HCT116 (cell line): ENCODE measurements at regions of chr19 and their contacts with region 1.

Region 1: DNA sequence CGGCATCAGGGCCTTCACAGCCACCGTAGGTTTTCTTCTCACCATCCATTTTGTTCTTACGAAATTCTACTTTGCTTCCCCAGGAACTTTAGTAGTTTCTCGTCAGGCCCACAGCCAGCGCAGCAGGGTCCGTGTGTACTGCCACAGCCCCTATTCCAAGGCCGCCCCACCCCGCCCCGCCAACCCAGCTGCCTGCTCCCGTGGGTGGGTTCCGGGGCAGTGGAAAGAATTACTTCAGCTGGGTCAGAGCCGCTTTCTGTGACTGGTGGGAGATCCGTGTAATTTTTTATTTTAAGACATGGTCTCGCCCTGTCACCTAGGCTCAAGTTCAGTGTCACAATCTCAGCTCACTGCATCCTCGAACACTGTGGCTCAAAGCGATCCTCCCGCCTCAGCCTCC is 4.2 kb downstream of the OR7D2 start:
- DNase-seq: no peak
- ATAC-seq: no peak
- H3K4me3 ChIP-seq: no peak overlapping the region
- H3K27ac ChIP-seq: no peak overlapping the region
- H3K4me1 ChIP-seq: no peaks in the 10 kb centered on the region
- H3K27me3 ChIP-seq: no peaks in the 10 kb centered on the region
- CTCF ChIP-seq: no peak
- POLR2A ChIP-seq: no peak
- RAD21 ChIP-seq: no peak

Region 2: DNA sequence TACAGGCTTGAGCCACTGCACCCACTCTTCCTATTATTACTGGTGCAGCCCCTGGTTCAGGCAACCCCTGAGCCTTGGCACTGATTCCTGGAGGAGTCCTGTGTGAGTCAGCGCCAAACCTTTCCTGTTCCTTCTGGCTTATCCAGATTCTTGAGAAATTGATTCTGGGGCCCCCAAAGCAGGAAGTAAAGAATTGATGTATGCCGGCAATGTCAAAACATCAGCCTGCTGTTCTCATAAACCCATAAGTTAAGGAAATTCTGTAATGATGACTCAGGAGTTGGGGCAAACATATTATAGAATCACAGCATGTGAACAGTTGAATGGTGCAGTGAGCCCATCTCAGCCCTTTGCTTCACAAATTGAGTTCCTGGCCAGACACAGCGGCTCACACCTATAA is 54.8 kb before region 1 on chr19:
- CTCF ChIA-PET with region 1: no interaction called
- POLR2A ChIA-PET with region 1: no interaction called
- RAD21 ChIA-PET with region 1: no interaction called
- intact Hi-C with region 1: no loop called
- DNase-seq: peak; percentile 82
- ATAC-seq: peak; percentile 90
- H3K4me3 ChIP-seq: peak overlapping the region in 1 of 2 experiments; percentile 31; a peak in 1 of 4 replicates
- H3K27ac ChIP-seq: peak overlapping the region; percentile 57
- H3K4me1 ChIP-seq: peaks cover 16 to 31% of the 10 kb centered on the region in 2 experiments
- H3K27me3 ChIP-seq: no peaks in the 10 kb centered on the region
- CTCF ChIP-seq: no peak
- POLR2A ChIP-seq: no peak
- RAD21 ChIP-seq: peak; percentile 30; the same call in 1 of the 2 replicates

Region 3: GRCh38 chr19:9171393-9171991 is 11.5 kb before region 1 on chr19:
- CTCF ChIA-PET with region 1: no interaction called
- POLR2A ChIA-PET with region 1: no interaction called
- RAD21 ChIA-PET with region 1: interaction called in 1 of 2 experiments, 10 read pairs
- intact Hi-C with region 1: no loop called
- DNase-seq: no peak
- ATAC-seq: no peak
- H3K4me3 ChIP-seq: no peak overlapping the region
- H3K27ac ChIP-seq: no peak overlapping the region
- H3K4me1 ChIP-seq: no peaks in the 10 kb centered on the region
- H3K27me3 ChIP-seq: no peaks in the 10 kb centered on the region
- CTCF ChIP-seq: no peak
- POLR2A ChIP-seq: no peak
- RAD21 ChIP-seq: no peak